ENCODE measurements at regions of chr3 and their contacts with region 1.

Region 1: DNA sequence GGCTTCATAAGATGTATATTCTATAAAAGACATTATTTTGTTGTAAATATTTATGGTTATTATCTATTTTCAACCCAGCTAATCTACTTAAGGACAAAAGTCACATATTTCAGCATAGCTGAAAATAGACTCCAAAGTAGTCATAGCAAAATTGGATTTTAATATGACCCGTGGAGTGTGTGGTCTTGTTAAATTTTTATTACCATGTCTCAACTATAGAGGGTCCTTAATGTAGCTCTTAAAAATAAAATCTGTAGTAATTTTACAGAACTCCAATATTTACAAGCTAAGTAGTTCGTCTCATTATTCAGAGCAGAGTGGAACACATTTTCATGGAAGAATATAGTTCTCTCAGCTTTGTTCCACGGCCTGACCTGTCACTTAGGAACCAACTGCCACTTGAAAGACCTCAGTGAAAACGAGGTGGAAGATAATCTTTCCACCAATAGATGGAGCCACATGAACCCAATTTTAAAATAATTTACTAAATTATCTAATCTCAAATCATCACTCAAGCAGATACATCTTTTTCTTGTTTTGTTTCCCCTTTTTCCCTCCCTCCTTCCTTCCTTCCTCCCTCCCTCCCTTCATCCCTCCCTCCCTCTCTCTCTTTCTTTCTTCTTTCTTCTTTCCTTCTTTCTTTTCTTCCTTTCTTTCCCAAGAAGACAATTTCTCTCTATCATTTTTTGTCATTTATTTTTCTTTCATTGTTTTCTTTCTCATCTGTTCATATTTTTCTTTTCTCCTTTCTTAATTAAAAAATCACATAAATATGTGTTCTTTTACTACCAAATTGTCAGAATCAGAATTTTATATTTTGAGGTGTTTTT is 97.2 kb downstream of the CLDN1 start:
- DNase-seq: no peak
- ATAC-seq: peak; percentile 45
- H3K4me3 ChIP-seq: no peak overlapping the region
- H3K27ac ChIP-seq: no peak overlapping the region
- H3K4me1 ChIP-seq: no peaks in the 10 kb centered on the region
- H3K27me3 ChIP-seq: no peaks in the 10 kb centered on the region
- CTCF ChIP-seq: peak; percentile 13 to 38 (median 16); a peak in 3 of 6 replicates
- EP300 ChIP-seq: no peak
- POLR2A ChIP-seq: no peak
- RAD21 ChIP-seq: peak; percentile 60

Region 2: GRCh38 chr3:190038050-190038933 is 186.8 kb before region 1 on chr3:
- CTCF ChIA-PET with region 1: no interaction called
- POLR2A ChIA-PET with region 1: no interaction called
- RAD21 ChIA-PET with region 1: no interaction called
- SMC1A ChIA-PET with region 1: no interaction called
- in situ Hi-C with region 1: no loop called
- intact Hi-C with region 1: no loop called
- DNase-seq: no peak
- ATAC-seq: peak; percentile 21; the same call in 1 of the 3 replicates
- H3K4me3 ChIP-seq: no peak overlapping the region
- H3K27ac ChIP-seq: no peak overlapping the region
- H3K4me1 ChIP-seq: no peaks in the 10 kb centered on the region
- H3K27me3 ChIP-seq: no peaks in the 10 kb centered on the region
- CTCF ChIP-seq: no peak
- EP300 ChIP-seq: no peak
- POLR2A ChIP-seq: no peak
- RAD21 ChIP-seq: no peak

Region 3: GRCh38 chr3:190205739-190206138 is 19.3 kb before region 1 on chr3:
- CTCF ChIA-PET with region 1: interaction called, 37 read pairs
- POLR2A ChIA-PET with region 1: interaction called, 6 read pairs
- RAD21 ChIA-PET with region 1: interaction called, 36 read pairs
- SMC1A ChIA-PET with region 1: interaction called, 45 read pairs
- in situ Hi-C with region 1: no loop called
- intact Hi-C with region 1: no loop called
- DNase-seq: peak; percentile 42
- ATAC-seq: peak; percentile 81
- H3K4me3 ChIP-seq: no peak overlapping the region
- H3K27ac ChIP-seq: 0 out of 2 replicates have a peak overlapping the region, but pooled peaks have one; percentile 6
- H3K4me1 ChIP-seq: peaks cover 6% of the 10 kb centered on the region
- H3K27me3 ChIP-seq: no peaks in the 10 kb centered on the region
- CTCF ChIP-seq: no peak
- EP300 ChIP-seq: peak in 1 of 2 experiments; percentile 75; a peak in 1 of 4 replicates
- POLR2A ChIP-seq: no peak
- RAD21 ChIP-seq: no peak

Region 4: DNA sequence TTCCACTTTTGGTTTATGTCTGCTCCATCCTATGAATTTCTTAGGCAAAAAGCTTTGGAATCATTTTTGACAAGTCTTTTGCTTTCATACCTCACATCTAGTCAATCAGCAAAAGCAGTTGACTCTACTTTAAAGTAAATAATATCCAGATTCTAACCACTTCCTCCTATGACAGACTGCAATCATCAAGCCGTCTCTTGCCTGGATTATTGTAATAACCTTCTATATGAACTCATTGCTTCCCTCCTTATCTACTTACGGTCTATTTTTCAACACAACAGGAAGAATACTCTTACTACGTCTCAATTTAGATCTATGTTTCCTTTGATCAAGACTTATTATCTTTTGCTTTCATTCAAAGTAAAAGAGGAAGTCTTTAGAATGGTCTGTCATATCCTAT is 76.5 kb after region 1 on chr3:
- CTCF ChIA-PET with region 1: interaction called, 10 read pairs
- POLR2A ChIA-PET with region 1: interaction called, 4 read pairs
- RAD21 ChIA-PET with region 1: interaction called, 4 read pairs
- SMC1A ChIA-PET with region 1: interaction called, 4 read pairs
- in situ Hi-C with region 1: no loop called
- intact Hi-C with region 1: no loop called
- DNase-seq: no peak
- ATAC-seq: peak; percentile 41
- H3K4me3 ChIP-seq: no peak overlapping the region
- H3K27ac ChIP-seq: no peak overlapping the region
- H3K4me1 ChIP-seq: no peaks in the 10 kb centered on the region
- H3K27me3 ChIP-seq: no peaks in the 10 kb centered on the region
- CTCF ChIP-seq: no peak
- EP300 ChIP-seq: no peak
- POLR2A ChIP-seq: no peak
- RAD21 ChIP-seq: no peak

Region 5: GRCh38 chr3:190384241-190384863 is 159.3 kb after region 1 on chr3:
- CTCF ChIA-PET with region 1: interaction called, 74 read pairs
- POLR2A ChIA-PET with region 1: no interaction called
- RAD21 ChIA-PET with region 1: interaction called, 56 read pairs
- SMC1A ChIA-PET with region 1: interaction called, 102 read pairs
- in situ Hi-C with region 1: no loop called
- intact Hi-C with region 1: loop called (anchors 2 kb)
- DNase-seq: peak; percentile 19
- ATAC-seq: peak; percentile 94
- H3K4me3 ChIP-seq: no peak overlapping the region
- H3K27ac ChIP-seq: no peak overlapping the region
- H3K4me1 ChIP-seq: no peaks in the 10 kb centered on the region
- H3K27me3 ChIP-seq: no peaks in the 10 kb centered on the region
- CTCF ChIP-seq: peak; percentile 49 to 68 (median 59); a peak in 5 of 6 replicates
- EP300 ChIP-seq: no peak
- POLR2A ChIP-seq: no peak
- RAD21 ChIP-seq: peak; percentile 82

Region 6: DNA sequence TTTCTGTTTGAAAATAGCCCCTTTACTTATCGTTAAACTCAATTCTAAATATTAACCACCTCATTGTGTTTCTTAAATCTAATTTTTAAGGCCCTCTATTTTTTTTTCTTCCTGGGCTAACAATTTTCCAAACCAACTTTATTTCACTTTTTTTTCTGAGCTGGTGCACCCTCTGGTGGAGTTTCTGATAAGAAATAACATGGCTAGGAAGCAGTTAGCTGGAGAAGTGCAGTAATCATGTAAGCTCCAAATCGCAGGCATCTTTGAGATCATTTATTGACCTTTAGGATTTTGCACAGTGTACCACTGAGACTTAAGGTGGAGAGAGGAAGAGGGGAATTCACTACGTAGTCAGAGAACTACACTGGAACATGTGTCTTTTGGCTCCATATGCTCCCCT is 218.2 kb after region 1 on chr3:
- CTCF ChIA-PET with region 1: interaction called, 6 read pairs
- POLR2A ChIA-PET with region 1: no interaction called
- RAD21 ChIA-PET with region 1: interaction called, 12 read pairs
- SMC1A ChIA-PET with region 1: interaction called, 3 read pairs
- in situ Hi-C with region 1: no loop called
- intact Hi-C with region 1: no loop called
- DNase-seq: no peak
- ATAC-seq: no peak
- H3K4me3 ChIP-seq: no peak overlapping the region
- H3K27ac ChIP-seq: no peak overlapping the region
- H3K4me1 ChIP-seq: no peaks in the 10 kb centered on the region
- H3K27me3 ChIP-seq: no peaks in the 10 kb centered on the region
- CTCF ChIP-seq: peak in 1 of 3 experiments; percentile 6; a peak in 1 of 6 replicates
- EP300 ChIP-seq: no peak
- POLR2A ChIP-seq: no peak
- RAD21 ChIP-seq: no peak

Measured in GM12878 (cell line).